Pancreas (tissue), 10 donors: ENCODE measurements at regions of chr1 and their contacts with region 1.

Region 1: GRCh38 chr1:28259307-28260167 is at the start of gene SESN2:
- DNase-seq: peak; percentile 98 to 99 (median 99)
- ATAC-seq: peak; percentile 95 to 98 (median 96)
- H3K4me3 ChIP-seq: peak within 1 kb of the TSS; percentile 76 to 100 (median 94)
- H3K27ac ChIP-seq: peak within 1 kb of the TSS; percentile 50 to 84 (median 72)
- H3K4me1 ChIP-seq: peaks cover 0 to 11% (median 4%) of the 10 kb centered on the region in 3 donors
- H3K27me3 ChIP-seq: no peaks in the 10 kb centered on the region
- CTCF ChIP-seq: no peak
- total RNA-seq, gene SESN2: 4.0 to 38.3 (median 7.3) TPM

Region 2: DNA sequence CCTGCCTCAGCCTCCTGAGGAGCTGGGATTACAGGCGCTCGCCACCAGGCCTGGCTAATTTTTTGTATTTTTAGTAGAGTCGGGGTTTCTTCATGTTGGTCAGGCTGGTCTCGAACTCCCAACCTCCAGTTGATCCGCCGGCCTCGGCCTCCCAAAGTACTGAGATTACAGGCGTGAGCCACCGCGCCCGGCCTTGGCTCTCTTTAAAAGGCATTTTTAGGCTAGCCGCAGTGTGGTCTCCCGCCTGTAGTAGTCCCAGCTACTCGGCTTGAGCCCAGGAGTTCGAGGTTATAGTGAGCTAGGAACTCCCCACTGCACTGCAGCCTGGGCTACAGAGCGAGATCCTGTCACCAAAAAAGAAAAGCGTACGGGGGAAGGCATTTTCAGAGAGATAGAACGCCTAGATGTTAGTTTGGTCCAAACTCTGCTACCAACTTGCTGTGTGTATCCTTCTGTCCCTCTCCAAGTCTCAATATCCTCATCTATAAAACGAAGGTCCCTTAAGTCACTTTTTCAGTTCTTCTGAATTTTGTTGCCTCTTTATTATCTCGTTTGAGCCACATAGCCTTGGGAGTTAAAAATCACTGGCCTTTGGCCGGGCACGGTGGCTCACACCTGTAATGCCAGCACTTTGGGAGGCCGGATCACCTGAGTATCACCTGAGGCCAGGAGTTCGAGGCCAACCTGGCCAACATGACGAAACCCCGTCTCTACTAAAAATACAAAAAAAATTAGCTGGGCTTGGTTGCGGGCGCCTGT is 70.0 kb after region 1 on chr1:
- intact Hi-C with region 1: loop called in 1 of 3 experiments (anchors 10 kb)
- DNase-seq: peak in 5 of 6 donors; percentile 26 to 63 (median 43)
- ATAC-seq: peak; percentile 26 to 60 (median 44)
- H3K4me3 ChIP-seq: peak overlapping the region; percentile 30 to 71 (median 60)
- H3K27ac ChIP-seq: peak overlapping the region; percentile 62 to 91 (median 78)
- H3K4me1 ChIP-seq: peaks cover 0 to 5% (median 0%) of the 10 kb centered on the region in 3 donors
- H3K27me3 ChIP-seq: no peaks in the 10 kb centered on the region
- CTCF ChIP-seq: no peak

Region 3: DNA sequence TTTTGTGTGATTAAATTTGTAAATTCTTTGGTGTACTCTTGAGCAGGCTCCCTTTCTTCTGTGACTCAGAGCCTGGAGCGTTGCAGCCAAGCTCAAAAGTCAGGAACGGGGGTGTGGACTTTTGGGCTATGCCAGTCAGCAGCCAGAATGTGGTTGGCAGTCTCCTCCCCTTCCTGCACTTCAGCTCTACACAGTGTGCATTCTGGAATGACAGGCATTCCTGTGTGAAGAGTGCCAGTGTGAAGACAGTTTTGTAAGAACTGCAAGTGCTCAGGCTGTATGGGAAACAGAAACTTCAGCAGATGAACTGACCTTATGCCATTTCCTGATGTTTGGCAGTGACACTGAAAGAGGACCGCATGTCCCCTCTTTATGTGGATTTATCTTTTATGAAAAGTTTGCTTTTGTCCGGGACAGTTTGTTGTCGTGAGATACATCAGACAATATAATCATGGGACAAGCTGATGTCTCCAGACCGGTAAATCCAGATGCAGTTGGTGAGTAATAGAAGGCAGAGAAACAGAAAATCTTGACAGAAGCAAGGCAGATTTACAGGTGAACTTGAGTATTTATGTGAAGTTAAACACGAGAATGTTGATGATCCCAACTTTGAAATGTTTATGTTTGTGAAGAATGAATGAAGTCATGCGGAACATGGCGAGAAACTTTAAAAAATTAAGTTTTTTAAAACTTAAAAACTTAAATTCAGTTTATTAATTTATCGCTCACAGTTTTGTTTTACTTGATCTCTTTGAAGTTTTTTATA is 178.6 kb after region 1 on chr1:
- intact Hi-C with region 1: no loop called
- DNase-seq: peak in 4 of 6 donors; percentile 65 to 81 (median 70)
- ATAC-seq: peak; percentile 93 to 98 (median 97)
- H3K4me3 ChIP-seq: no peak overlapping the region
- H3K27ac ChIP-seq: peak overlapping the region; percentile 3 to 77 (median 48)
- H3K4me1 ChIP-seq: peaks cover 13 to 26% (median 18%) of the 10 kb centered on the region in 3 donors
- H3K27me3 ChIP-seq: no peaks in the 10 kb centered on the region
- CTCF ChIP-seq: no peak